ENCODE measurements at regions of chr6 and their contacts with region 1.

Region 1: DNA sequence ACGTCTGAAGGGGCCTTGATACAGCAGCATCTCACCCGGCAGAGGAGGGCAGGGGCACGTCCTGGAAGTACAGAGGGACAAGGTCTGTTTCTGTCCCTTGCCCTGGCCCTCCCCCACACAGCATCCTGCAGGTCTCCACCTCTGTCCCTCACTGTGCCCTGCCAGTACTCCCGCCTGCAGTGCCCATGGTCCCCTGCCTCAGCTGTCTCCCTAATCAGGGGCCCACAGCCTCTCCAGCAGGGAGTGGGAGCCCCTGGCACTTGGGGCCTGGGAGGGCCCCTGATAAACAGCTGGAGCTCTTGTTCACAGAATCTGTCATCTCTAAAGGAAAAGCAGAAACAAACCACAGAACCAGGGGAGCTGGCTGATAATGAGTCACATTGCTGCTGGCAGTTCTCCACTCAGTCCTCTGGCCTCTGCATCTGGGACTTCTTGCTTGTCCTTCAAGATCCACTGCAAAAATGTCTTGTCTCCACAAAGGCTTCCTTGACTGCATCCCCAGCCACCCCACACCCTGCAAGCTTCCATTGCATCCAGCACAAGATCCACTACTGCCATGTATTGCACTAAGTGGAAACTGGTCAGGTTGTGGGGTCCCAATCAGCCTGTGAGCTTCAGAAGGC is 33.2 kb upstream of the TAF8 start:
- DNase-seq: peak; percentile 77
- H3K4me3 Mint-ChIP-seq: peak overlapping the region; percentile 62
- H3K27ac Mint-ChIP-seq: peak overlapping the region; percentile 90
- H3K4me1 Mint-ChIP-seq: peaks cover 52% of the 10 kb centered on the region
- H3K27me3 Mint-ChIP-seq: no peaks in the 10 kb centered on the region

Region 2: DNA sequence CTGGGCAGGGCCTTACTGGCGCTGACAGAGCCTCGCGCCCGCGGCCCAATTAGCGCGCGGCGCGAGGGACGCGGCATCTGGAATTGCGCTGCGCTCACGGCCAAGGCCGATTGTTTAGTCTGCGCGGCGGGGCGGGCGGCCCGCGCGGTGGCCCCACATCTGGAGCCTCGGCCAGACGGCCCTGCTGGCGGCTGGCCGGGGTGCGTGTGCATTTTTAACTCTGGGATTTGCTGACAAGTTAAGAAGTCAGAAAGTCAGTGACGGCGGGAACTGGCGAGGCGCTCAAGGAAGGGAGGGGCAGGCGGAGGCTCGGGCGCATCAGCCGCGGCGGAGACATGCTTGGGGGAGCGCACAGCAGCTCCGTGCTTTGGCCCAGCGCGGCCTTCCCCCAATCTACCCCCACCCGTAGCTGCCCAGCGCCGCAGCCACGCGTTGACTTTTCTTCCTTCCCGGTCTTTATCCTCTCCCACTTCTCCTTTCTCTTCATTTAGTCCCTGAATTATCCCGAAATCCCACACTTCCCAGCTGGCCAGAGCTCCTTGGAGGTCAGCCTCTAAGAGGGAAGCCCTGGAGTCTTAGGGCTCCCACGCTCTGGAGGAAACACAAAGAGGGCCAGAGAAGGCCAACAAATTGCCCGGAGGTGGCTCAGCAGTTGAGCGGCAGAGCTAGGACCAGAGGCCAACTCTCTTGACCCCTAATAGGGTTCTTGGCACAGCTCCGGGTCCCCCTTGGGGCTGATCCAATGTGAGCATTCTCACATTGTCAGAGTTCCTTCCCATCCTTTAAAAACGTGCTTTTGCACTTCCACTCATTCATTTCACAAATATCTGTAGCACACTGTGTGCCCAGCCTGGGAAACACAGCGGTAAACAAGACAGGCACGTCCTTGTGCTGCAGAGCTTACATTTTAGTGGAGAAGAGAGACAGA is 511.7 kb before region 1 on chr6:
- intact Hi-C with region 1: no loop called
- DNase-seq: peak; percentile 61
- H3K4me3 Mint-ChIP-seq: peak overlapping the region; percentile 31
- H3K27ac Mint-ChIP-seq: no peak overlapping the region
- H3K4me1 Mint-ChIP-seq: peaks cover 11% of the 10 kb centered on the region
- H3K27me3 Mint-ChIP-seq: peaks cover 73% of the 10 kb centered on the region

Region 3: DNA sequence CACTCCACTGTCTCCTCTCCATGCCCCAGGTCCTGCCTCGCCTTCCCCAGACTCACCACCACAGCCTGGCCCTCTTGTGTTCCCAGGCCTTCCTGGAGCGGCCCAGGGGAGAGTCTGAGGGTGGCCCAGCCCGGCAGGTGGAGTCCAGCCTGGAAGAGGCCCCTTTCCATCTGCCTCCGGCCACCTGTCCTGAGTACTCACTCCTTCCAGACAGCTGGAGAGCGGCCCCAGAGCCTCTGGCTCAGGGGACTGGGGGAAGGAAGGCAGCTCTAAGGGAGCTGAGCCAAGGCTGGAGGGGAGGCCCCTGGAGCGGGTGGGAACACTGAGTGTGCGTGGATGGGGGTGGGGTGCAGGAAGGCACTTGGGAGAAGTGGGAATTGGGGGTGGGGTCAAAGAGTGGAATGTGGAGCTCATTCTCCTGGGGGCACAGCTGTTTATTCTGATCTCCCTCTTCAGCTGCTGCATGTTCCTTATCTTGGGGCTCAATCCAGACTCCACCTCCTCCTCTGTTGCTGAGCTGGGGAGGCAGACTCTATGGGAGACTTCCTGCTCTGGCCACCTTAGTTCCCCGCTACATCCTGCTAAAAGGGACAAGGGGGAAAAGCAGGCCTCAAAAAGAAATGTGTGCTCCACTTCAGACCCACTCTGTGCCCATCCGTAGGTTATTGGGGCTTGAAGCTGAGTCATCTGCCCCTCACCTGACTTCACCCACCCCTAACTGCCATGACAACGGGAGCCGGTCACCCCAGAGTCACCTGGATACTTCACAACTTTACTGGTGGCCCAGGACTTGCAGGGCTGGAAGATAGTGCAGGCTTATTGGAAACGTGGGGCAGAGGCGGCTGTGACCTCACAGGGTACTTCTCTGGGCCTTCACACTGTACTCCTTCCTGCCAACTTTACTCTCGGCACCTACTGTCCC is 13.7 kb after region 1 on chr6:
- intact Hi-C with region 1: loop called (anchors 1 kb)
- DNase-seq: peak; percentile 79
- H3K4me3 Mint-ChIP-seq: peak overlapping the region; percentile 65
- H3K27ac Mint-ChIP-seq: peak overlapping the region; percentile 93
- H3K4me1 Mint-ChIP-seq: peaks cover 68% of the 10 kb centered on the region
- H3K27me3 Mint-ChIP-seq: no peaks in the 10 kb centered on the region

Region 4: DNA sequence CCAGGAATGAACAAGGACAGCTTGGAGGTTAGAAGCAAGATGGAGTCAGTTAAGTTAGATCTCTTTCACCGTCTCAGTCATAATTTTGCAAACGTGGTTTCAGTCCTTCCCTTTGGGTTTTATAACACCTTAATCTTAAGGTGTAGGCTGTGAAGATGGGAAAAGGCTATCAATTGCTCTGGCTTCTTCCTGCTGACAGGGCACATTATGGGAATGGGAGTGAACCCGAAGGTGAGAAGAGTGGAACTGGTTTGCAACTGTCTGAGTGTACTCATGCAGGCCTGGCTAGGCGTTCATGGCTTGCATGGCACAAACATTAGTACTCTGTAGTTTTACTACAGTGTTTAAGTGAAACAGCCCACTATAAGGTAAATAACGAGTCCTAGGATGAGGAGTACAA is 42.6 kb after region 1 on chr6:
- intact Hi-C with region 1: no loop called
- DNase-seq: no peak
- H3K4me3 Mint-ChIP-seq: no peak overlapping the region
- H3K27ac Mint-ChIP-seq: no peak overlapping the region
- H3K4me1 Mint-ChIP-seq: peaks cover 7% of the 10 kb centered on the region
- H3K27me3 Mint-ChIP-seq: no peaks in the 10 kb centered on the region

Measured in activated CD4-positive, alpha-beta T cell treated with anti-CD3 and anti-CD28 coated beads, Interleukin-2, amount 10 ng/mL, durations not matched to agents 24 days and 14 days (primary cell).